Ascending aorta (tissue), 2 donors: ENCODE measurements at regions of chr6 and their contacts with region 1.

Region 1: GRCh38 chr6:111591104-111591900 is 14.4 kb downstream of the TRAF3IP2 start:
- DNase-seq: peak; percentile 55 to 95
- H3K4me3 ChIP-seq: no peak overlapping the region
- H3K27ac ChIP-seq: peak overlapping the region; percentile 82 to 84
- H3K4me1 ChIP-seq: peaks cover 11 to 58% of the 10 kb centered on the region in 2 donors
- H3K27me3 ChIP-seq: no peaks in the 10 kb centered on the region
- CTCF ChIP-seq: no peak

Region 2: DNA sequence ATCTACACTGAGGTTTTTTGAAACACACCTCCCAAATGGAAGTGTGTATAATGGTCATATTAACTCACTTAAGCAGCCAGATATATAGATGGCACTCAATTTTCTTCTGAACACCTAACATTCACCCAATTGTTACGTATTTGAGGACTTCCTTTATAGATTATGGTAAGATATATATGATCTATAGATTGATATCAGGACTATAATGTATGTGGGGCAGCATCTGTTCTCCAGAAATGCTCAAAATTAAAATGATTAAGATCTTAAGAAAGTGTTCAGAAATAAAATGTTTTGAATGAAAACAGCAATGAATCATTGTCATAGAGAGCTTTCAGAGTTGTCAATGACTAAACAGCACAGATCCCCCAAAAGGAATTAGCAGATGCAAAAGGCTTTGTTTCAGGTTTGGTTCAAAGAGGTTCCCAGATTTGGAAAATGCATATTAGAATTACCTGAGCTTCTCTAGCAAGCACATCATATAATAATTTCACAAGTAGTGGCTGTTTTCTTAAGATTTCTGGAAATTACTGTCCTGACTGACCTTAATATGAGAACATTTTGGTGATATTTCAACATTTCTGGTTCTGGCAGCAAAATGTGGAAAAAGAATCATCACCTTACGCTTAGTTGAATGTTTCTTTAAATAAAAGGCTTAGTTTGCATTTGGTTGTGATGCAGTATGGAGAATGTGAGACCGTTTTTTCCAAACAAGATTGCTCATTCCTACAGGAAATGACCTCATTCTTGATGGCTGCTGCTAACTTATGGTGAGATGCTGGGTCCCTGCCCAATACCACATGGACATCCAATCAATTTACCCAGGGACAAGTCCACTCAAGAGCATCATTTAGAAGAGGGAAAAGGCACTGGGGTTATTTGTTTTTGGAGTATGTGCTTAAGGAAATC is 17.2 kb before region 1 on chr6:
- intact Hi-C with region 1: loop called (anchors 1 kb)
- DNase-seq: peak in 1 of 2 donors; percentile 83
- H3K4me3 ChIP-seq: no peak overlapping the region
- H3K27ac ChIP-seq: peak overlapping the region; percentile 64 to 71
- H3K4me1 ChIP-seq: peaks cover 0 to 29% of the 10 kb centered on the region in 2 donors
- H3K27me3 ChIP-seq: no peaks in the 10 kb centered on the region
- CTCF ChIP-seq: no peak

Region 3: DNA sequence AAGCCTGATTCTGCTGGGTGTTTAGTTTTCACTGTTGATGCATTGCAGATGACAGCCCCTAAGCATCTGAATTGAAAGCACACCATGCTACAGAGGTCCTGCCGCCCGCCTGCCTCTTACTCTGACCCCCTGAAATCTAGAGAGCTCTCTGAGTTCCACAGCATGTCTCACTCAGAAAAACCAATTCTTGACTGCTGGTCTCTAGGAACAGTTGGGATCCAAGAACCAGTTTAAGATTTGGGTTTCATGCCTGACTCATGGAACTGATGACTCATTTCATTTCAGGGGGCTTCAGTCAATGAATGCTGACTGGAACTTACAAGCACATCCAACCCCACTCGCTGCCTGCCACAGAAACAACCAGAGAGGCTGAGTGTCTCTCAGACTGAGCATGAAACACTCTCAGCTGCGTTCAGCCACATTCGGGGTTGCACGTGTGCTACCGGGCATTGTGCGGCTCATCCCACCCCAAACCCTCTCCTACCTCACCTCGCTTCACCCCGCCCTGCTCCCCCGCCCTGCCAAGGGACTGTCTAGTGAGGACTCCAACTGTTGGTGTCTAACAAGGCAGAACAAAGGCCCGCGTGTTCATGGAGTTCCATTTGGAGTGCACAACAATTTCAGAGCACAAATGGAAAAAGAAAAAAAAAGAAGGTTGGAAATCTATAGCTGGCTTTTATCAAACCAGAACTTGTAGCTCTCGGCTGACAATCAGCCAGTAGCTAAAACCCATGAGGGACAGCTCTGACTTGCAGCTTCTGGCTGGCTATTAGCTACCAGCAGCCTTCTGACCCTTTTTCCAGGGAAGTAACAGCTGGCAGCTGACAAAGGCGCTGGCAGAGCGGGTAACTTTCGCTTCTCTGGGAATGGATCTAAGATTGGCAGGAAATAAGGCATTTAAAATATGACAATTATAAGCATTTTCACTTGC is 34.4 kb after region 1 on chr6:
- intact Hi-C with region 1: no loop called
- DNase-seq: peak in 1 of 2 donors; percentile 75
- H3K4me3 ChIP-seq: peak overlapping the region; percentile 14 to 57
- H3K27ac ChIP-seq: peak overlapping the region; percentile 52 to 77
- H3K4me1 ChIP-seq: peaks cover 0 to 20% of the 10 kb centered on the region in 2 donors
- H3K27me3 ChIP-seq: no peaks in the 10 kb centered on the region
- CTCF ChIP-seq: no peak